Dendritic cell treated with granulocyte-macrophage colony-stimulating factor and Interleukin-4, amounts not matched to agents 40 ng/mL and 50 ng/mL, for 4 days (primary cell): ENCODE measurements at regions of chr19 and their contacts with region 1.

Region 1: DNA sequence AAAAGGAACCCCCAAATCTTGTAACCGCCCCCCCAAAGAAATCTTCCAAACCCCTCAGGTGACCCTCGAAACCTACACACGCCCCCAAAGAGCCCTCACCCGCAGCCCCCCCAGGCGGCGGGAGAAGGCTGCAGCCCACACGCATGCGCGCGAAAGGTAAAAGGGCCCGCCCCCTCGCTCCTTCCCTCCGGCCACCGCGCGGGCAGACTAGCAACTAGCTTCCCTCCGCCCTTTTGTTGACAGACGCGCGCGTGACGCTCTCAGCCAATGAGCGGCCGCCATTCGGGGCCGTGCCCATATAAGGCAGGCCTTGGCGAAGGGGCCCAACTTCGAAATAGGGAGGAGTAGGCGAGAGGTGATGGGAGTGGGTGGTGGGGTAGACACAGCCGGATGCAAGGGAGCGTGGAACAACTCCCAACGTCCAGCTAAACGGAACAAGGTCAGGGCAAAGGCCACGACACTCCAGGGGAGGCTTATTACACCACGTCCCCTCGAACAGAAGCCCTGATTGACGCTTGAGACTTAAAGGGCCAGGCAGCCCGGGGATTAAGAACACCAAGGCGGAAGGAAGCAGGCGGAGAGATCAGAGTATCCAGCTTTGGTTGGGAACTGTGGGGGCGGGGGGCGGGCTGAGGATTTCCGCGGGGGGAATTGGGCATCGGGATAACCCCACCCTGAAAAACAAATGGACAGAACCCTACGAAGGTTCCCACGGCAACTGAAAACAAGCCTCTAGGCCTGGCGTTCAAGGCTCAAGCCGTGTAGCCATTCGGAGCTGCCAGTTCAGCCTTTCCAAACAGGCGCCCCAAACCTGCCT is 13.3 kb downstream of the FBXO46 start:
- H3K4me3 Mint-ChIP-seq: peak overlapping the region; percentile 95
- H3K27ac Mint-ChIP-seq: peak overlapping the region; percentile 80
- H3K4me1 Mint-ChIP-seq: peaks cover 66% of the 10 kb centered on the region
- H3K27me3 Mint-ChIP-seq: no peaks in the 10 kb centered on the region

Region 2: DNA sequence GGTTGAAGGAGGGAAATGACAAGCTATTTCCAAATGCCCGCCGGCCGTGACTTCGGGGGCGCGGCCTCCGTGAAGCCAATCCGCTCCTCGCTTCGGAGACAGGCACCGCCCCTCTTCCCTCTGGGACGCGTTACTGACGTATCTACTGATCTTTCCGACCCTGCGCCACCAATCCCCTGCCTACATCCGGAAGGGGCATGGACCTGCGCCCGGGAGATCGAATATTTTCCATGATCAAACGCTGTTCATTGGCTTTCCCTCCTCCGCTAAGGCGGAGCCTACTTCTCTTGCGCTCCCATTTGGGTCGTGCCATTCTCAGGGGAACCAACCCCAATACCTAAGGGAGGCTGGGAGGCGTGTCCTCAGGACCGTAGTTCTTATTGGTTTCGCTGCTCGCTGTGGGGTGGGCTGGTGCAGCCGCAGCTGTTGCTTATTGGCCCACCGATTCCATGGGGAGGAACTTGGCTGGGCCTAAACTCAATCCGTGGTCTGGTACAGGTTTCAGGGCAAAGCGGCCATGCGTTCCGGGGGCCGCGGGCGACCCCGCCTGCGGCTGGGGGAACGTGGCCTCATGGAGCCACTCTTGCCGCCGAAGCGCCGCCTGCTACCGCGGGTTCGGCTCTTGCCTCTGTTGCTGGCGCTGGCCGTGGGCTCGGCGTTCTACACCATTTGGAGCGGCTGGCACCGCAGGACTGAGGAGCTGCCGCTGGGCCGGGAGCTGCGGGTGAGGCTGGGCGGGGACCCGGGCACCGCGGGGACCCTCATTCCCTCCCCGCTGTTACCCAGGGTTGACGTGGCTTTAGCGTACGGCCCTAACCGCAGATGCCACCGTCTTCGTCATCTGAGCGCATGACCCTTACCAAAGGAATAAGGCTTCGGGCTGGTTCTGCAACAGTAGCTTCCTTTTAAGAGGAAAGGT is 24.9 kb before region 1 on chr19 and contains the start of gene QPCTL:
- intact Hi-C with region 1: loop called (anchors 1 kb)
- H3K4me3 Mint-ChIP-seq: peak within 1 kb of the TSS; percentile 96
- H3K27ac Mint-ChIP-seq: peak within 1 kb of the TSS; percentile 87
- H3K4me1 Mint-ChIP-seq: peaks cover 14% of the 10 kb centered on the region
- H3K27me3 Mint-ChIP-seq: no peaks in the 10 kb centered on the region

Region 3: GRCh38 chr19:45730389-45731288 is 13.3 kb after region 1 on chr19 and contains the start of gene FBXO46:
- intact Hi-C with region 1: loop called (anchors 1 kb)
- H3K4me3 Mint-ChIP-seq: peak within 1 kb of the TSS; percentile 97
- H3K27ac Mint-ChIP-seq: peak within 1 kb of the TSS; percentile 91
- H3K4me1 Mint-ChIP-seq: peaks cover 49% of the 10 kb centered on the region
- H3K27me3 Mint-ChIP-seq: no peaks in the 10 kb centered on the region